PC-9 (cell line): ENCODE measurements at regions of chr14 and their contacts with region 1.

Region 1: DNA sequence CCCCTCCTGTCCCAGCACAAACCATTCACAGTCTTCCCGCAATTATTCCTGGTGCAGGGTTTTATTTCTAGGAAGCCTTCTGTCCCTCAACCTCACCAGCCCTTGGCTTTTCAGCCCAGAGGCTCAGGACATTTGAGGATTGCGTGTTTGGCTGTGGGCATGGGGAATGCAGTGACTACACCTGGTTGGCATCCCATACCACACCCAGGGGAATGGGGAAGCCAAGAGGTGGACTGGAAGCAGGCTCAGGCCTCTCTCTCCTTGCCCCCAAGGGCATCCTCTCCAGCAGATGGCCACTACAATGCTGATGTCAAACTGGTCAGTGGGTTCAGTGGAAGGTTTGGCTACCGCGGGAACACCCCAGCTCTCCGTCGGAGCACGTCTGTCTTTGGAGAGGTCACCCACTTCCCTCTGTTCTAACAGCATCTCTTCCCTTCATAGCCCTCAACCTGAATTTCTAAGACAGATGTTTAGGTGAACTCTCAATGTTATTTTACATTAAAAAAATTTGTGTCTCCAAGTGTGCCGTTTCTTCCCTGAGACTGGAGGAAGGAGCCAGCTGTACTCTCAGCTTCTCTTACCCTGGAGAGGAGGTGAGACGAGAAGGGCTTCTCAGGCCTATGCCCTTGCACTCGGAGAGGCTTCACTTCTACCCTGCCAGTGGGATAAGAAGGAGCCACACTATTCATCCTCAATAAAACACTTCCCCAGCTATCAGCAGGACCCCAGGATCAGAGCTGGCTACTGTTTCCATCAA is 35.5 kb downstream of the DCAF4 start:
- DNase-seq: peak; percentile 93 to 95
- H3K4me3 ChIP-seq: no peak overlapping the region
- H3K27ac ChIP-seq: peak overlapping the region; percentile 82
- H3K4me1 ChIP-seq: peaks cover 32% of the 10 kb centered on the region
- H3K27me3 ChIP-seq: no peaks in the 10 kb centered on the region
- CTCF ChIP-seq: no peak; the same call in 1 of the 2 replicates

Region 2: GRCh38 chr14:71812693-71813092 is 1149.1 kb before region 1 on chr14:
- CTCF ChIA-PET with region 1: no interaction called
- POLR2A ChIA-PET with region 1: no interaction called
- intact Hi-C with region 1: no loop called
- DNase-seq: no peak
- H3K4me3 ChIP-seq: no peak overlapping the region
- H3K27ac ChIP-seq: no peak overlapping the region
- H3K4me1 ChIP-seq: no peaks in the 10 kb centered on the region
- H3K27me3 ChIP-seq: peaks cover 10% of the 10 kb centered on the region; the same call in 1 of the 2 replicates
- CTCF ChIP-seq: no peak

Region 3: DNA sequence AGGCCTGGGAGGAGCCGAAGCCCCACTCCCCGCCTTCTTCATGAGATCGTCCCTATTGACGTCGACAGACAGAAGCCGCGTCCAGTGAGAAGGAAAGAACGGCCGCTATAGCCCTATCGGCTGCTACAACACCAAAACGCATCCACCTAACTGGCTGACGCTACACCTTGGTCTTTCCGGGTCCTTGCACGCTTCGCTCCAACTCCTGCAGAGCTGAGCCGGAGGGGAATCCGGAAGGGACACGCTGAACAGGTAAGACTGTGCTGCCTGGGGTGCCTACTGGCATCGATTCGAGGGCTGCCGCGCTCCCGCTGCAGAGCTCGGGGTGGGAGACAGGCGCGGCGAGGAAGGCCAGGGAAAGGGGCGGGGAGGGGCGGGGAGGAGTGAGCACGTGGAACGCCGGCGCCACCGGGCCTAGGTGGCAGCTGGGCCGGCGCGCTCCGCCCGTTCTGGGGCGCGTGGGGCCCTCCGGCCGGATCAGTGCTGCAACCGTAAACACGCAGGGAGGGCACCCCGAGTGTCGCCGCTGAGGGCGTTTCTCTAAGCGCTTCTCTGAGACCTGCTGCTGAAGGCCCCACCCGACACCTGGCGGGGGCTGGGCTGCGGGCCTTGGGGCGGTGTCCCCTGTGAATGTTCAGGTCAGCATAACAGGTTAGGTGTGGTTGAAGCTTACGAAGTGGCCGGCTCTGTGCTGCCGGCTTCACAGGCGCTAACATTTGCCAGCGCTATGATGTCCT is 35.3 kb before region 1 on chr14 and contains the start of gene DCAF4:
- CTCF ChIA-PET with region 1: no interaction called
- POLR2A ChIA-PET with region 1: no interaction called
- intact Hi-C with region 1: loop called (anchors 1 kb)
- DNase-seq: peak; percentile 96 to 97
- H3K4me3 ChIP-seq: peak within 1 kb of the TSS; percentile 89
- H3K27ac ChIP-seq: peak within 1 kb of the TSS; percentile 62
- H3K4me1 ChIP-seq: no peaks in the 10 kb centered on the region
- H3K27me3 ChIP-seq: no peaks in the 10 kb centered on the region
- CTCF ChIP-seq: no peak
- total RNA-seq, gene DCAF4: 17.6 and 20.0 TPM in 2 replicates

Region 4: GRCh38 chr14:73026845-73027542 is 65.2 kb after region 1 on chr14 and contains the start of gene ZFYVE1:
- CTCF ChIA-PET with region 1: interaction called, 5 read pairs
- POLR2A ChIA-PET with region 1: no interaction called
- intact Hi-C with region 1: loop called (anchors 2 kb)
- DNase-seq: peak; percentile 95
- H3K4me3 ChIP-seq: peak within 1 kb of the TSS; percentile 77
- H3K27ac ChIP-seq: no peak within 1 kb of the TSS
- H3K4me1 ChIP-seq: peaks cover 9% of the 10 kb centered on the region
- H3K27me3 ChIP-seq: no peaks in the 10 kb centered on the region
- CTCF ChIP-seq: no peak
- total RNA-seq, gene ZFYVE1: 8.8 and 9.0 TPM in 2 replicates

Region 5: GRCh38 chr14:73058224-73058921 is 96.6 kb after region 1 on chr14 and contains the start of gene RBM25:
- CTCF ChIA-PET with region 1: interaction called, 5 read pairs
- POLR2A ChIA-PET with region 1: interaction called, 5 read pairs
- intact Hi-C with region 1: loop called (anchors 1 kb)
- DNase-seq: peak; percentile 96
- H3K4me3 ChIP-seq: peak within 1 kb of the TSS; percentile 99
- H3K27ac ChIP-seq: peak within 1 kb of the TSS; percentile 91
- H3K4me1 ChIP-seq: peaks cover 21% of the 10 kb centered on the region
- H3K27me3 ChIP-seq: no peaks in the 10 kb centered on the region
- CTCF ChIP-seq: no peak
- total RNA-seq, gene RBM25: 59.2 and 68.9 TPM in 2 replicates

Region 6: DNA sequence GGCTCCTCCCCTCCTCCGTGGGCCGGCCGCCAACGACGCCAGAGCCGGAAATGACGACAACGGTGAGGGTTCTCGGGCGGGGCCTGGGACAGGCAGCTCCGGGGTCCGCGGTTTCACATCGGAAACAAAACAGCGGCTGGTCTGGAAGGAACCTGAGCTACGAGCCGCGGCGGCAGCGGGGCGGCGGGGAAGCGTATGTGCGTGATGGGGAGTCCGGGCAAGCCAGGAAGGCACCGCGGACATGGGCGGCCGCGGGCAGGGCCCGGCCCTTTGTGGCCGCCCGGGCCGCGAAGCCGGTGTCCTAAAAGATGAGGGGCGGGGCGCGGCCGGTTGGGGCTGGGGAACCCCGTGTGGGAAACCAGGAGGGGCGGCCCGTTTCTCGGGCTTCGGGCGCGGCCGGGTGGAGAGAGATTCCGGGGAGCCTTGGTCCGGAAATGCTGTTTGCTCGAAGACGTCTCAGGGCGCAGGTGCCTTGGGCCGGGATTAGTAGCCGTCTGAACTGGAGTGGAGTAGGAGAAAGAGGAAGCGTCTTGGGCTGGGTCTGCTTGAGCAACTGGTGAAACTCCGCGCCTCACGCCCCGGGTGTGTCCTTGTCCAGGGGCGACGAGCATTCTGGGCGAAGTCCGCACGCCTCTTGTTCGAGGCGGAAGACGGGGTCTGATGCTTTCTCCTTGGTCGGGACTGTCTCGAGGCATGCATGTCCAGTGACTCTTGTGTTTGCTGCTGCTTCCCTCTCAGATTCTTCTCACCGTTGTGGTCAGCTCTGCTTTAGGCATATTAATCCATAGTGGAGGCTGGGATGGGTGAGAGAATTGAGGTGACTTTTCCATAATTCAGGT is 174.8 kb after region 1 on chr14 and contains the start of gene PSEN1:
- CTCF ChIA-PET with region 1: no interaction called
- POLR2A ChIA-PET with region 1: no interaction called
- intact Hi-C with region 1: loop called (anchors 2 kb)
- DNase-seq: peak; percentile 78 to 97
- H3K4me3 ChIP-seq: peak within 1 kb of the TSS; percentile 83
- H3K27ac ChIP-seq: peak within 1 kb of the TSS; percentile 89
- H3K4me1 ChIP-seq: peaks cover 9% of the 10 kb centered on the region
- H3K27me3 ChIP-seq: no peaks in the 10 kb centered on the region
- CTCF ChIP-seq: no peak
- total RNA-seq, gene PSEN1: 33.5 and 44.0 TPM in 2 replicates

Region 7: GRCh38 chr14:73977600-73978295 is 1016.0 kb after region 1 on chr14:
- CTCF ChIA-PET with region 1: no interaction called
- POLR2A ChIA-PET with region 1: interaction called, 24 read pairs
- intact Hi-C with region 1: no loop called
- DNase-seq: peak in 1 of 2 experiments; percentile 73
- H3K4me3 ChIP-seq: no peak overlapping the region
- H3K27ac ChIP-seq: 0 out of 2 replicates have a peak overlapping the region, but pooled peaks have one; percentile 2
- H3K4me1 ChIP-seq: peaks cover 20% of the 10 kb centered on the region
- H3K27me3 ChIP-seq: no peaks in the 10 kb centered on the region
- CTCF ChIP-seq: no peak